ENCODE measurements at regions of chr2 and their contacts with region 1.

Region 1: GRCh38 chr2:97740590-97741182 is 27.3 kb downstream of the ZAP70 start:
- DNase-seq: peak; percentile 43
- H3K4me3 Mint-ChIP-seq: no peak overlapping the region
- H3K27ac Mint-ChIP-seq: no peak overlapping the region
- H3K4me1 Mint-ChIP-seq: peaks cover 61% of the 10 kb centered on the region
- H3K27me3 Mint-ChIP-seq: no peaks in the 10 kb centered on the region

Region 2: DNA sequence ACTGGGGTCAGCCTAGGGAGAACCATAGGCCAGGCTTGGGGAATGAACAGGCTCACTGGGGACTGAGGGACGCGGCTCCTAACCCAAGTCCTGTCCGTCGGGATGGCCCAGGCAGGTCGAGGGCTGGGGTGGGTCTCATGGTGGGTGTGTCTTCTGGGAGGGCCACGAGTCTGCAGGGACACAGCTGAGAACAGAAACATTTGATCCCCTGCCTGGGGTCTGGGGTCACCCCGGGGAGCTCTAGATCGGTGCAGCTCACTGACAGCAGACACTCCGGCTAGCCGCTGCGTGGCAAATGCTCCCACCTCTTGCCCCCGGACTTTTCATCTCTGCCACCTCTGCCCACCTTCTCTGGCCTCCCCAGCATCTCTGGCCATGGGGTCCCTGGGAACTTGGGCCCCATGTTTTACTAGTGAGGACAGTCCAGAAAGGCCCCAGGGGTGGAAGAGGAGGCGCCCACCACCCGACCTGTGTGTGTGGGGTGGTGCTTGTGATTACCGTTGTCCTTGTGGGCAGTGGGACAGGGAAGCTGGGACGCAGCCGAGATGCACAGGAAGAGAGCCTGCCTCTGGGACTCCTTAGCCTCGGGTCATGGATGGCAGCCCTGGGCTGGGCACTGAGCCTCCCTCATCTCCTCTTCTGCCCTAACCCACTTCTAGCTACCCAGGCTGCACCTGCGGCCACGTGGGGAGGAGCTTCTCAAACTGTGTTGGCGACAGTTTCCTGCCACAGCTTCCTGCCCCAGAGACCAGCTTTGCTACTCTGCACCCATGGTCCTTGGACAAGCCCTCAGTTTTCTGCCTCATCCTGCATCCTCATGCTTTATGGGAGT is 22.4 kb before region 1 on chr2:
- CTCF ChIA-PET with region 1: interaction called, 12 read pairs
- POLR2A ChIA-PET with region 1: interaction called, 5 read pairs
- DNase-seq: peak; percentile 86
- H3K4me3 Mint-ChIP-seq: peak overlapping the region; percentile 95
- H3K27ac Mint-ChIP-seq: peak overlapping the region; percentile 92
- H3K4me1 Mint-ChIP-seq: peaks cover 77% of the 10 kb centered on the region
- H3K27me3 Mint-ChIP-seq: no peaks in the 10 kb centered on the region

Region 3: GRCh38 chr2:97728091-97728731 is 12.5 kb before region 1 on chr2:
- CTCF ChIA-PET with region 1: interaction called, 29 read pairs
- POLR2A ChIA-PET with region 1: no interaction called
- DNase-seq: no peak
- H3K4me3 Mint-ChIP-seq: no peak overlapping the region
- H3K27ac Mint-ChIP-seq: no peak overlapping the region
- H3K4me1 Mint-ChIP-seq: peaks cover 33% of the 10 kb centered on the region
- H3K27me3 Mint-ChIP-seq: no peaks in the 10 kb centered on the region

Measured in activated CD4-positive, alpha-beta T cell treated with anti-CD3 and anti-CD28 coated beads, Interleukin-2, amount 10 ng/mL, durations not matched to agents 7 days and 5 days (primary cell).